Activated B cell treated with CpG ODN at 0.5 μM for 24 hours (primary cell): ENCODE measurements at regions of chr13 and their contacts with region 1.

Region 1: DNA sequence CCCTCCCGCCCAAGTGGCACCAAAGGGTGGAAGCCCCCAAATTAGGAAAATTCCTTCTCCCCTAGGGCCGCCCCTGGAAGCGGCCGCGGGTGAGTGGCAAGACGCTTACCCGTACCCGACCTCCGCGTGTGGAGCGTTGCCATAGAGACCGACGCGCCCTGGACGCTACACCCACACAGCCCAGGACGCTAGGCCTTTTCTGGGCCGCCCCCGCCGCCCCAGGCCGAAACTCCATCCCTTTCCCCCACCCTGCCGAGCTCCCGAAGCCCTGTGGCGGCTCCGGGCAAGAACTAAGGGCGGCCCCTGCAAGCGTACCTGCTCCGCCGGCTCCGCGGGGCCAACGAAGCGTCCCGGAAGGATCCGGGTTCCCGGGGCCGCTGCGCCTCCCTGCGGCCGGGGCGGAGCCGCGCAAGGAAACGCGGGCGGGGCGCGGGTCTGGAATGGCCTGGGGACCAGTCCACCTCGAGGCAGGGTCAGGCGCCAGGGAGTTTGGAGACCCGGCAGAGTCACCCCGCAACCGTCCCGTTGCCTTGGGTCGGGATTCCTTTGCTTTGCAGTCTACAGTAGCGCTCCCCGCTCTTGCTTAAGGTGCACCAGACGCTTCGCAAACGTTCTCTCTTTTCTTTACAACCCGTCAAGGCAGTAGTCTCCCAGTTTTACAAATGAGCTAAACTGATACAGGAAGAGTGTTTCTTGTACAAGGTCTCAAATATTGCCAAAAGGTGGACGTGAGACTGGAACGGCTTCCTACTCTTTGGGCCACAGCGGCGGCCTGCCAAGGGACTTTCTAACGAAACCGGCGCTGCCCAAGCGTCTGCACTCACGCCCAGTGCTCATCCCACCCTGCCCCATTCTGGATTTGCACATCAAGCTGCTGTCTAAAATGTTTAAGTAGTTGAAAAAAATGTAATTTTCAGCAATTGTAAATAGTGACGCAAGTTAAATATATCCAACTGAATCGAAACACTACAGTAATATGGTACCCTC is at the start of gene NEK5:
- DNase-seq: peak; percentile 56
- ATAC-seq: peak; percentile 68
- H3K4me3 Mint-ChIP-seq: peak within 1 kb of the TSS; percentile 87
- H3K27ac Mint-ChIP-seq: no peak within 1 kb of the TSS
- H3K4me1 Mint-ChIP-seq: peaks cover 17% of the 10 kb centered on the region
- H3K27me3 Mint-ChIP-seq: peaks cover 14% of the 10 kb centered on the region
- CTCF ChIP-seq: no peak
- total RNA-seq, gene NEK5: not detected in 2 replicates

Region 2: DNA sequence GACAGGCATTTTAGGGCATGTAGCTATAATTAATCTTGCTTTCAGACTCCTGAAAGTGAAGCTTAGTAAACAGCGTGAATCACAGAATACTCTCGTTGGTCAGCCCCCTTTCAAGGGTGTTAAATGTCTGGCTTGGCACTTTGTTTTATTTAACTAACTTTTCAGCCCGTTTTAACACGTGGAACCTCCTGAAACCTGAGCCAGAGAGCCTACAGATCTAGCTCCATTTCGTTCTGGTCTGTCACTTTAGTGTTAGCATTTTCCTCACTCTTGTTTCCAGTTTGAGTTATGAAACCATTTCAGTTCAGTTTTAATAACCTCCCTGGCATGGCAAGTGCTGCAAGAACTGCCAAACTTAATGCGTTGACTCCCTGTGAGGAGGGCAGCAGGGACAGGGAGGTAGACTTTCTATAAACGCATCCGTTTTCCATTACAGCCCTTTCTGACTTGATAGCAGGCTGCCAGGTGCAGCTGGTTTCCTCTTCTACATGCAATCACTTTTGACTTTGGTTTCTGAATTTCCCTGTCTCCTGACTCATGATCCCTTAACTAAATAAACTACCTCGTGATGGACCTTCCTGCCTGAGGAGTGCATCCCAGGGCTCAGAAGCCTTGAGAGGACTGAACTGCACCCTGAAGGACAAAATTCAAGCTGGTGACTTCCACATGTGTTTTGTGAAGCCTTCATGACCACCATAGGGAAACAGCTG is 1478.3 kb before region 1 on chr13:
- CTCF ChIA-PET with region 1: no interaction called
- POLR2A ChIA-PET with region 1: no interaction called
- intact Hi-C with region 1: no loop called
- DNase-seq: no peak
- ATAC-seq: peak; percentile 42
- H3K4me3 Mint-ChIP-seq: peak overlapping the region; percentile 42
- H3K27ac Mint-ChIP-seq: peak overlapping the region; percentile 46
- H3K4me1 Mint-ChIP-seq: peaks cover 21% of the 10 kb centered on the region
- H3K27me3 Mint-ChIP-seq: peaks cover 4% of the 10 kb centered on the region
- CTCF ChIP-seq: no peak

Region 3: DNA sequence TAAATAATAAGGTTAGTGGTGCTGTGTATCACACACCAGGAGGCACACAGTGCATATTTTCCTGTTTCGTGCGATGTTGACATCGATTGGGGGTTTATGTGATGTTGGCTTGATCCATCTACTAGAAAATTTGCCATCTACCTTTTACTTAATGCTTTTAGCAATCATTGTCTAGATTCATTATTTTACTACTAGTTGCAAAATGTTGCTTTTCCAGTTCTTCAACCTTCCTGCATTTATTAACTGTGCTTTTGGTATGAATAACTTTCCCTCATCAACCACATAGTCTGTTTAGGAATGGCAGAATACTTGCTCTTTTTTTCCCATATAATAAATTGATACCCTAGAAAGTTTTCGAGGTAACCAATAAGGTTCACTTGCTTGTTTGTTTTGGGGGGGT is 1035.4 kb before region 1 on chr13:
- CTCF ChIA-PET with region 1: no interaction called
- POLR2A ChIA-PET with region 1: no interaction called
- intact Hi-C with region 1: no loop called
- DNase-seq: no peak
- ATAC-seq: no peak
- H3K4me3 Mint-ChIP-seq: no peak overlapping the region
- H3K27ac Mint-ChIP-seq: no peak overlapping the region
- H3K4me1 Mint-ChIP-seq: no peaks in the 10 kb centered on the region
- H3K27me3 Mint-ChIP-seq: peaks cover 15% of the 10 kb centered on the region
- CTCF ChIP-seq: no peak

Region 4: GRCh38 chr13:51435002-51435578 is 693.9 kb before region 1 on chr13:
- CTCF ChIA-PET with region 1: no interaction called
- POLR2A ChIA-PET with region 1: no interaction called
- intact Hi-C with region 1: loop called (anchors 5 kb)
- DNase-seq: no peak
- ATAC-seq: peak; percentile 50
- H3K4me3 Mint-ChIP-seq: no peak overlapping the region
- H3K27ac Mint-ChIP-seq: no peak overlapping the region
- H3K4me1 Mint-ChIP-seq: peaks cover 3% of the 10 kb centered on the region
- H3K27me3 Mint-ChIP-seq: no peaks in the 10 kb centered on the region
- CTCF ChIP-seq: peak; percentile 46

Region 5: DNA sequence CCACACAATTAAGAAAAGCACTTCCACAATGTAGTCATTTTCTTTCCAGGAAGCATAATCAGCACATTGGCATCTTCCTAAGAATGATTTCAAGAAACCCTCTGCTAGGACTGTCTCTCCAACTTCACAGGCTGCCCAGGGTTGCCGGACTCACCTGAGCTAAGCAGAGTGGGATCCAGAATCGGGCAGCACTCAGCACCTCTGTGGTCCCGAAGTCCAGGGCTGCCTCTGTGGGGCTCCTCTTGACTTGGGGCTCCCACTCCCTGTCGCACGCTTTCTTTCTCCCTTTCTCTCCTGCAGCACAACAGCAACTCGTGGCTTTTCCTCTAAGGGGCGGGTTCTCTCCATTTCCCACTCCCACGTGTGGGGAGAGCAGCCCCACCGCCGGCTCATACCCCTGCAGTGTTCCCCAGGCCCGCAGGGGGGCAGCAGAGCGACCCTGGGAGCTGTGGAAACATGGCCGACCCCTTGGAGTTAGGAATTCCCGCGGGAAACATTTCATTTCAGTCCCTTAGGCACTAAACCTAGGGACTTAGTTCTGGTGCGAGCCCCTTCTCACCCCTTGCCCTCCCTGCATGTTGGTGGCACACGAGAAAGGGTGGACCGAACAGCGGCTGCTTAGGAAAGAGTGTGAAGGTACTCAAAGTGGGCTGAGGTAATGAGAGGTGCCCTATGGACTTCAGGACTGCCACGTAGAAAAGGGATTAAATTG is 284.0 kb before region 1 on chr13 and contains the start of gene TMEM272:
- CTCF ChIA-PET with region 1: no interaction called
- POLR2A ChIA-PET with region 1: no interaction called
- intact Hi-C with region 1: loop called (anchors 1 kb)
- DNase-seq: peak; percentile 37
- ATAC-seq: peak; percentile 78
- H3K4me3 Mint-ChIP-seq: no peak within 1 kb of the TSS
- H3K27ac Mint-ChIP-seq: no peak within 1 kb of the TSS
- H3K4me1 Mint-ChIP-seq: peaks cover 2% of the 10 kb centered on the region
- H3K27me3 Mint-ChIP-seq: peaks cover 10% of the 10 kb centered on the region
- CTCF ChIP-seq: no peak
- total RNA-seq, gene TMEM272: not detected in 2 replicates

Region 6: GRCh38 chr13:52001120-52001731 is 127.8 kb before region 1 on chr13:
- CTCF ChIA-PET with region 1: interaction called, 4 read pairs
- POLR2A ChIA-PET with region 1: no interaction called
- intact Hi-C with region 1: loop called (anchors 1 kb)
- DNase-seq: no peak
- ATAC-seq: peak; percentile 85
- H3K4me3 Mint-ChIP-seq: no peak overlapping the region
- H3K27ac Mint-ChIP-seq: no peak overlapping the region
- H3K4me1 Mint-ChIP-seq: no peaks in the 10 kb centered on the region
- H3K27me3 Mint-ChIP-seq: peaks cover 6% of the 10 kb centered on the region
- CTCF ChIP-seq: no peak